ENCODE measurements at regions of chr20 and their contacts with region 1.

Region 1: DNA sequence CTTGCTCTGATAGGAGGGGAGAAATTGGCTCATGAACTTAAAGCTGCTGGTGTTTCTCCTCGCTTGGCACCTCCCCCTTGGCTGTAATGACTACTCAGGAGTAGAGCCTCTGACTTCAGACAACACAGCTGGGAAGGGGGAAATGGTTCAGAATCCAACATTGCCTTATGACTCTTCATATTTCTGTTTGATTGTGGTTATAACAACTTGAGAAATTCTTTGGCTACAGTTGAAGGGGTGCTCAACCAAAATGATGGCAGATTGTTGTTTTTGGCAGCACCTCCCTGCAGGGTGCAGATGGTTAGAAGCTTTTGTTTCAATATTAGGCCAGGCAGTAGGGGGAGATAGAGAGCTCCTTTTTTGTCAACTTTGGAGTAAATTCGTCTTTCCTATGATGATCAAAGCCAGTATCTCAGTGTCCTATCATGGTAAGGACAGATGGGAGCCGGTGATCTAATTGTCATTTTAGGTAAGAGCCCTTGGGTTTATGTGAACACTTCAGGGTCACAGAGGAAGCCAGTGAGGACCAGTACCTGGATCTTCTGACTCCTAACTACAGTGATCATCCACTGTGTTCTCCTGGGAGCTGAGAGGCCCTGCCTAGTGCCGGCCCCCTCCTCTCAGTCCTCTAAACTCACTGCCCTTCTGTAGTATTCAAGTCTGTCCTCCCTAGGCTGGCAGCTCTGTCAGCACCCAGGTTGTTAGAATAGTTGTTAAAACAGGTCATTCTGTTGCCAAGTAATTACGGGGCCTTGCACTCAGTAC is 39.9 kb downstream of the RPRD1B start:
- DNase-seq: peak; percentile 93
- H3K4me3 ChIP-seq: no peak overlapping the region; the same call in 1 of the 2 replicates
- H3K27ac ChIP-seq: peak overlapping the region; percentile 60
- H3K27me3 ChIP-seq: no peaks in the 10 kb centered on the region
- CTCF ChIP-seq: peak; percentile 87

Region 2: GRCh38 chr20:38084400-38084951 is 11.0 kb after region 1 on chr20:
- CTCF ChIA-PET with region 1: interaction called, 31 read pairs
- POLR2A ChIA-PET with region 1: interaction called, 11 read pairs
- DNase-seq: peak; percentile 78
- H3K4me3 ChIP-seq: no peak overlapping the region
- H3K27ac ChIP-seq: peak overlapping the region; percentile 89
- H3K27me3 ChIP-seq: no peaks in the 10 kb centered on the region
- CTCF ChIP-seq: no peak

Region 3: DNA sequence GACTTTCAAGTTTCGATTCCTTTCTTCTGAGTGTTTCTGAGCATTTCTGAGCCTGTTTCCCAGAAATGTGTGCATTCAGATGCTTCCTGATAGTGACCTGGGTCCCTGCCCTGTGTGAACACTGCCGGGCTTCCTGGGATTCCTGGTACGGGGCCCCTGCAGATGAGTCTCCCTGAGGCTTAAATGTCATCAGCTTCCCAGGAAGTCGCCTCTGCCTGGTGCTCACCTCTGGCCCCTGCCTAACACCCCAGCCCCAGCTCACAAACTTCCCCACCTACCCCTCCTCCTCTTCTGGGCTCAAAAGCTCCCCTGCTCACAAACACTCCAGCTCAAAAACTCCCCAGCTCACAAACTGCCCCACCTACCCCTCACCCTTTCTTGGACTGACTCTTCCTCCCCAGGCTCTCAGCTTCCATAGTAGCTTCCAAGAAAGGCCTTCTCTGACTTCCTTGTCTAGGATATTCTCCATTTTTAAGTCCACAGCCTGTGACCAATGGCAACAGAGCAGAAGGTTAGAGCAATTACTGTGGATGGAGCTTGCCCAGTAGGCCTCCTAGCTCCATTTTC is 49.6 kb after region 1 on chr20:
- CTCF ChIA-PET with region 1: interaction called, 10 read pairs
- POLR2A ChIA-PET with region 1: interaction called, 4 read pairs
- DNase-seq: no peak
- H3K4me3 ChIP-seq: no peak overlapping the region
- H3K27ac ChIP-seq: peak overlapping the region; percentile 95
- H3K27me3 ChIP-seq: no peaks in the 10 kb centered on the region
- CTCF ChIP-seq: no peak

Region 4: GRCh38 chr20:38138086-38138777 is 64.7 kb after region 1 on chr20:
- CTCF ChIA-PET with region 1: interaction called, 8 read pairs
- POLR2A ChIA-PET with region 1: interaction called, 12 read pairs
- DNase-seq: no peak
- H3K4me3 ChIP-seq: no peak overlapping the region
- H3K27ac ChIP-seq: no peak overlapping the region
- H3K27me3 ChIP-seq: no peaks in the 10 kb centered on the region
- CTCF ChIP-seq: no peak

Region 5: GRCh38 chr20:38165089-38165989 is 91.8 kb after region 1 on chr20 and contains the start of gene TGM2:
- CTCF ChIA-PET with region 1: interaction called, 12 read pairs
- POLR2A ChIA-PET with region 1: interaction called, 3 read pairs
- DNase-seq: no peak
- H3K4me3 ChIP-seq: peak within 1 kb of the TSS; percentile 70
- H3K27ac ChIP-seq: peak within 1 kb of the TSS; percentile 47
- H3K27me3 ChIP-seq: no peaks in the 10 kb centered on the region
- CTCF ChIP-seq: peak; percentile 77
- polyA plus RNA-seq, gene TGM2: 326 and 398 TPM in 2 replicates